PC-9 (cell line): ENCODE measurements at regions of chr1 and their contacts with region 1.

Region 1: GRCh38 chr1:84442256-84442655 is 36.8 kb upstream of the RPF1 start:
- DNase-seq: peak in 1 of 2 experiments; percentile 83
- H3K4me3 ChIP-seq: no peak overlapping the region
- H3K27ac ChIP-seq: no peak overlapping the region
- H3K4me1 ChIP-seq: peaks cover 10% of the 10 kb centered on the region
- H3K27me3 ChIP-seq: no peaks in the 10 kb centered on the region
- CTCF ChIP-seq: peak; percentile 80

Region 2: DNA sequence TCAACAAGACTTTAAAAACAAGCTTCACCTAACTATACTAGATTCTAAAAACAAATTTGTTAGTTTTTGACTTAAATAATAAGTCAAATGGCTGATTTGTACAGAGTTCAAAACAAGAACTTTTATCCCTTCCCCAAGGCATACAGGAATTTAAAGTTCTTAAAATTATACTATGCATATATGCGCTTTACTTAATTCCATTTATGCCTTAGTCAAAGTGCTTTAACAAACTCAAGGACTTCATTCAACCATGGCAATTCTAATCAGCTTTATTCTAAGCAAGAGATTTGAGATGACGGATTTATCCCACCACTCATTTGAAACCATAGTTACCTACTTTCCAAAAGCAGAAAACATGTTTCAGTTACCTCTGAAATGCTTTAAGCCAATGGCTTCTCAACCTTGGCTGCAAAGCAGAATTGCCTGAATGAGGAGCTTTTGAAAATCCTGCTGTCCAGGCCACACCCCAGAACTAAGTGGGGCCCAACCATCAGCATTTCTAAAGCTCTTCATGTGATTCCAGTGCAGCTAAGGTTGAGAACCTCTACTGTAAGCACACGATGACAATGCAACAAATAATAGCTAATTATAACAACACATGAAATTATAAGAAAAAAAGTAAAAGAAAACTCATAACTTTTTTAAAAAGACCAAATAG is 488.0 kb before region 1 on chr1:
- CTCF ChIA-PET with region 1: no interaction called
- POLR2A ChIA-PET with region 1: no interaction called
- intact Hi-C with region 1: no loop called
- DNase-seq: no peak
- H3K4me3 ChIP-seq: no peak overlapping the region
- H3K27ac ChIP-seq: no peak overlapping the region
- H3K4me1 ChIP-seq: no peaks in the 10 kb centered on the region
- H3K27me3 ChIP-seq: no peaks in the 10 kb centered on the region
- CTCF ChIP-seq: no peak

Region 3: DNA sequence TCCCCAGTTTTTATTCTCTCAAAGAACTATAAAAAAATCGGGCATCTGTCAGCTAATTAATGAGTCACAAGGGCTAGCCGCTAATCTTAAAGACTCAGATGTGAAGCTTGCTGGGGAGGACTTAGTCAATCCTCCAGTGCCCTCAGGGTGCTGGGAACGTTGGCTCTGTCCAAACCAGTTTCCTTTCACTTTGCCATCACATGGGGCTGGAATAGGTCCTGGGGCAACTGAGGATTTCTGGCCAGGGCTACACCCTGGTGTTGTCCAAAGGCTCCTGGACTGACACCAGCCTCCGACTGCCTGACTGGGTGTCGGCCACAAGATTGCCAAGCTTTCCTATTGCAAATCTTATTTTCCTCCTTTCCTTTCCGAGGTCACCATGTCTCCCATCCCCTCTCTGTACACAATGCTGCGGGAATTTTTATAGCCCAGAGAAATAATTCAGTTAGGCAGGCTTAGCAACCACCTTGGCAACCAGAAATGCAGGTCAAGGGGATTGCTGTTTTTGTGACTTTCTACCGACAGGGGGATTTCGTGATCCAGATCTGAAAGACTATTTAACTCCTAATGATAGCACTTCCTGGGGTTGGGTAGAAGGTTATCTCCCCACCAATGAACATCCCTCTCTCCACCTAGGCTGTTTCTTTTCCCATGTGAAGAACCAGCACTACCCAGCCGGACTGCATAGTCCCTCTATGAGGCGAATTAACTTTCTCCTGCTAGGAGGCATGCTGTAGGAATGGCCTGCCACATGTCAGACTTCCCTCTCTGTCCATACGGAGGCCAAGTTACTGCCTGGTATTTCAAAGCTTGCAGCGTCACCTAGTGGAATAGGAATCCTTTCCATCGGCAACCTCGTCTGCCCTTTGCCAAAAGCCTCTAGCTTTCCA is 161.9 kb after region 1 on chr1:
- CTCF ChIA-PET with region 1: interaction called, 4 read pairs
- POLR2A ChIA-PET with region 1: no interaction called
- intact Hi-C with region 1: loop called (anchors 2 kb)
- DNase-seq: peak; percentile 74 to 97
- H3K4me3 ChIP-seq: peak overlapping the region; percentile 52
- H3K27ac ChIP-seq: peak overlapping the region; percentile 60
- H3K4me1 ChIP-seq: peaks cover 36% of the 10 kb centered on the region
- H3K27me3 ChIP-seq: no peaks in the 10 kb centered on the region
- CTCF ChIP-seq: peak; percentile 92